Right ventricle myocardium inferior (tissue), 1 donor: ENCODE measurements at regions of chr15 and their contacts with region 1.

Region 1: GRCh38 chr15:75673426-75674235 is 25.9 kb downstream of the SNX33 start:
- DNase-seq: peak; percentile 92
- ATAC-seq: peak; percentile 84

Region 2: DNA sequence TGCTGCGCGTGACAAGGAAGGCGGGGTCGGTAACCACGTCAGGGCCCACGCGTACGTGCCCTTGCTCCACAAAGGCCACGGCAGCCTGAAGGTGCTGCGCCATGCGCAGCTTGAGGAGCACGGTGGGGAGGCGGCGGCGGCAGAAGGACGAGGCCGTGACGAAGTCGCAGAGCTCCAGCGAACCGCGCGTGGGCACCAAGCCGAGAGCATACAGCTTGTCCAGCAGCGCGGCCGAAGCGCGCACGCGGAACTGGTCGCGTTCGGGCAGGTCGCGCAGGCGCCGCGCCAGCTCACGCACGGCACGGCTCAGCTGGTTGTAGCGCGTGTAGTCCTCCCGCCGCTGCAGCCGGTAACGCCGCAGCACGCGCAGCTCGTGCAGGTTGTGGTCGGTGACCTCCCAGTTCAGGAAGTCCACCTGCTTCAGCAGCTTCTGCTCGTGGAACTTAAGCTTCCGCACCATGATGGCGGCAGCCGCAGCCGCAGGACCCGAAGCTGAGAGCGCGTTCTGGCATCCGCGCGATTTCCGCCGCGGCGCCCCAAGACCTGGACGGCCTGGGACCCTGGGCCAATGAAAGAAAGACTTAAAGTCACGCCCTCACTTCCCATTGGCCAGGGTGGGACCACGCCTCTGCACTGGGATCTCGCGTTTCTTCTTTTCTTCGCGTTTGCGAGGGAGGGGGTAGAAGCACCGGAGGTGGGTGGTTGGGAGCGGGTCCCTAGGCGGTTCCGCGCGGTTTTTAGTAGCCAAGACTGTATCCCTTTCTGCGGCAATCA is 33.7 kb before region 1 on chr15 and contains the start of gene IMP3:
- intact Hi-C with region 1: loop called (anchors 2 kb)
- DNase-seq: peak; percentile 97
- ATAC-seq: peak; percentile 98
- total RNA-seq, gene IMP3: 43.3 TPM

Region 3: GRCh38 chr15:75785771-75786574 is 112.3 kb after region 1 on chr15:
- intact Hi-C with region 1: no loop called
- DNase-seq: no peak
- ATAC-seq: no peak